Activated T-helper 2 cell treated with anti-CD3 and anti-CD28 coated beads, Interferon-gamma antibody, Interleukin-2, Interleukin-4, amounts not matched to agents 10 μg/mL and 5 μg/mL and 100 μg/mL, durations not matched to agents 14 hours and 24 hours and 36 hours (primary cell): ENCODE measurements at regions of chr5 and their contacts with region 1.

Region 1: DNA sequence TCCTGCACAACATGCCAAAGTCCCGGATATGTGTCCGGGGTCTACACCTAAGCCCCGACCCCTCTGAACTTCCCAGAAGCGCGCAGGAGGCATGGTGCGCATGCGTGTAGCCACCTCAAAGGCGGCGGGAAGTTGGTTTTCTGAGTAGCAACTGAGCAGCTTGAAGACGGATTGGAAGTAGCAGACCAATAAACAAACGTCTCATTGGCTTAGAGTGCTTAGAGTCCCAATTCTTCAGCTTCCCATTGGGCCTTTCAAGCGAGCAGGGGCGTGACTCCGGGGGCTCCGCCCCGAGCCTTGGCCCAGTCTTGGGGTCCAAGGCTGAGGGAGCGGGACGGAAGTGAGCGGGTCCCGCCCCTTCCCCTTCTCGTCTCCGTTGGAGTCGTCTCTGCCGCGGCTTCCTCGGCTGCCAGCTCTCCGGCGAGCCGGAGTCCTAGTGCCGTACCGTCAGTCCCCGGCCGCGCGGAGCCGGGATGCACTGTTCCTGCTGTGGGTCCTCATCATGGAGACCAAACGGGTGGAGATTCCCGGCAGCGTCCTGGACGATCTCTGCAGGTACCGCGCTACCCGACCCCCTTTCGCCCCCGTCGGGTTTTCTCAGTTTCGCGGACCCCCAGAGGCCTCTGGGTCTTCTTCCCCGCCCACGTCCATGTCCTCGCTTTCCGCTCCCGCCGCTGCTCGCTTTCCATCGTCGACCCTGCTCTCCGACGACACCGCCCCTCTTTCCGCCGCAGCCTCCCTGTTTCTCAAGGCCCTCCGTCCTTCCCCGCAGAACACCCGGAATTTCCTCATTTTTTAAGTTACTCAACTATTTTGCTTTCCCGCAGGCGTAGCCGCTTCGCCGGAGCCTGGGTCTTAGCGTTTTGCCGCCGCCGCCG is at the start of gene DCP2:
- DNase-seq: peak; percentile 96
- H3K4me3 Mint-ChIP-seq: peak within 1 kb of the TSS; percentile 99
- H3K27ac Mint-ChIP-seq: peak within 1 kb of the TSS; percentile 95
- H3K4me1 Mint-ChIP-seq: peaks cover 39% of the 10 kb centered on the region
- H3K27me3 Mint-ChIP-seq: no peaks in the 10 kb centered on the region
- total RNA-seq, gene DCP2: 81.6 and 84.1 TPM in 2 replicates

Region 2: GRCh38 chr5:112160652-112161391 is 815.8 kb before region 1 on chr5:
- intact Hi-C with region 1: loop called (anchors 5 kb)
- DNase-seq: peak; percentile 90
- H3K4me3 Mint-ChIP-seq: peak overlapping the region; percentile 90
- H3K27ac Mint-ChIP-seq: peak overlapping the region; percentile 80
- H3K4me1 Mint-ChIP-seq: peaks cover 34% of the 10 kb centered on the region
- H3K27me3 Mint-ChIP-seq: no peaks in the 10 kb centered on the region

Region 3: DNA sequence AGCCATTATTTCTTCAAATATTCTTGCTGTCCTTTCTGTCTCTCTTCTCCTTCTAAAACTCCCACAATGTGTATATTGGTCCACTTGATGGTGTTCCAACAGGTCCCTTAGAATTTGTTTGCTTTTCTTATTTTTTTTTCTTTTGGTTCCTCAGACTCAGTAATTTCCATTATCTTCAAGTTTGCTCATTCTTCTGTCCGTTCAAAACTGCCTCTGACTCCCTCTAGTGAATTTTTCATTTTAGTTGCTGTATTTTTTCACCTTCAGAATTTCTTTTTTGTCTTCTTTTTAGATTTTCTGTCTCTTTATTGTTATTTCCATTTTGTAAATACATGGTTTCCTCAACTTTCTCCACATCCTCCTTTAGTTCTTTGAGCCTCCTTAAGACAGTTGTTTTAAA is 122.0 kb before region 1 on chr5:
- intact Hi-C with region 1: no loop called
- DNase-seq: no peak
- H3K4me3 Mint-ChIP-seq: no peak overlapping the region
- H3K27ac Mint-ChIP-seq: no peak overlapping the region
- H3K4me1 Mint-ChIP-seq: peaks cover 7% of the 10 kb centered on the region
- H3K27me3 Mint-ChIP-seq: peaks cover 21% of the 10 kb centered on the region